Activated CD4-positive, alpha-beta memory T cell treated with anti-CD3 and anti-CD28 coated beads for 36 hours (primary cell): ENCODE measurements at regions of chr17 and their contacts with region 1.

Region 1: DNA sequence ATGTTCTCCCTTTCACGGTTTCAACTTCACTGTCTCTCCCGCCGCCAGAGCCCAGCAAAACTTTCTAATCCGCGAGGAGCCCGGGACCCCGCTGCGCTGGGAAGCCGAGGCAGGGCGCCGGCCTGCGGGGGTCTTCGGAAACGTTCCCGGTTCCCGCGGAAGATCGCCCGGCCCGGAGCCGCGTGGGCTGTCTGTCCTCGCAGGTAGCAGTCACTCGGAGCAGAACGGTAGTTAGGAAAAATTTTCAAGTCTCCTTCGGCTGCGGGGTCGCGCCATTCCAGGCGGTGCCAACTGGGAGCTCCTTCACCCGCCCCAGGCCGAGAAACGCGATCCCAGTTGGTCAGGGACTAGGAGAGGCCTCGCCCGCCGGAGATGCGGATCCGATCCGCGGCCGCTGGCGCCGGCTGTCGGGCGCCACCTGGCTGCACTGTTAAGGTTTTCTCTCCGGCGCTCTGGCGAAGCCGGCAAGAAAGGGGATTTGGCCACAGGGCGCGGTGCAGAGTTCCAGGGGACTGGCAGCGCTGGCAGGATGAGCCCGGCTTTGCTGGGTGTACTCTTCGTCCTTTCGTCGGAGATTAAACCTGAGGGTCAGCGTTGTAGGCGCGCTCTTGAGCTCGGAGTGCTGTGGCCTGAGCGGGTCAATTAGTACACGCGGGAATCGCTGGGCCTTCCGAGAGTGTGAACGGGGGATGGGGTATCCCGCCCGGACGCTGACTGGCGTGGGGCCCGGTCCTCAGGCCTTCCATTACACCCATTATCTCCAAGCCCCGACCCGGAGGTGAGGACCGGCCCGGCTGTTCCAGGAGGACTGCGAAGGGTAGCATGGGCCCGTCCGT is 135.4 kb downstream of the KCNJ12 start:
- DNase-seq: peak; percentile 78
- H3K4me3 Mint-ChIP-seq: peak overlapping the region; percentile 61
- H3K27ac Mint-ChIP-seq: no peak overlapping the region
- H3K4me1 Mint-ChIP-seq: peaks cover 16% of the 10 kb centered on the region
- H3K27me3 Mint-ChIP-seq: peaks cover 23% of the 10 kb centered on the region

Region 2: DNA sequence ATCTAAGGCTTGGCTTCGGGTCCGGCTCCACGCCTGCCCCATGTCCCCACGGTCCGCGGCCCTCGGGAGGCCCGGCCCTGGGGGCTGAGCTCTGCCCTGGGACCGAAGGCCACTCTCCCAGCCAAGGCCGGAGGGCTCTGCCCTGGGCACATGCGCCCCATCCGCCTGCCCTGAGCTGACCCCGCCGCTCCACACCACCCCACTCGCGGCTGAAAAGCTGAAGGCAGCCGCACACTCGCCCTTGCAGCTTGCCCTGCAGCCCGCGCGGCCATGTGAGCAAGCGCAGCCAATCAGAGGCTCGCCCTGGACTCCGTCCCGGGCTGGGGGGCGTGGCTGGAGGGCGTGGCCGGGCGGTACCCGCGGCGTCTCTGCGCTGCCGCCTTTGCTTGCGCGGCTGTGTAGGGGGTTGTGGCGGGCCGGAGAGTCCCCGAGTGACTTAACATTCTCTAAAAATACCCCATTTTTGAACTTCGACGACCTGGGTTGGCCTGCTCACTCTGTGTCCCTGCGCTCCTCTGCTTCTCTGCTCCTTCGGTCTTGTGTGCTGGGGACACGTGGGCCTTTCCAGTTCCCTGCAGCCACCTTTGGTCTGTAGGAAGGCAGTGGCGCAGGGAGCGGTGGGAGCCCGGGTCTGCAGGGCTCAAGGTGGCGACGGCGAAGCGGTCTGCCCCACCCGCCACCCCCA is 235.9 kb before region 1 on chr17:
- CTCF ChIA-PET with region 1: interaction called, 28 read pairs
- POLR2A ChIA-PET with region 1: no interaction called
- intact Hi-C with region 1: loop called (anchors 1 kb)
- DNase-seq: peak; percentile 96
- H3K4me3 Mint-ChIP-seq: peak overlapping the region; percentile 90
- H3K27ac Mint-ChIP-seq: peak overlapping the region; percentile 82
- H3K4me1 Mint-ChIP-seq: peaks cover 45% of the 10 kb centered on the region
- H3K27me3 Mint-ChIP-seq: no peaks in the 10 kb centered on the region

Region 3: DNA sequence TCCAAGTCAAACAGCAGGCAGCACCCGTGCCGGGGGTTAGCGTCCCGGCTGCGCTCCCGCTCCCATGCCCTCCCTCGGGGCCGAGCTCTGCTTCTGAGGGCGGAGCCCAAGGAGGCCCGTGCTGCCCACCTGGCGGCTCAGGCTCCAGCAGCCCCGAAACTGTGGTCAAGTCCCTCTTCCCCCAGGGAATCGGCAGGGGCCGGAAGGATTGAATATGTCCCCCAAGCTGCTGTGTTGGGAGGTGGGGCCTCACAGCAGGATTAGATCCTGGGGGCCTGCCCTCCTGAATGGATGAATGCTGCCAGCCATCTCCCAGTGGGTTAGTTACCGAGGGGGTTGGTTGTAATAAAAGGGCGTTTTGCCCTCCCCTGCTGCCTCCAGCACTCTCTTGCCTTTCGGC is 193.1 kb before region 1 on chr17:
- CTCF ChIA-PET with region 1: interaction called, 3 read pairs
- POLR2A ChIA-PET with region 1: no interaction called
- intact Hi-C with region 1: loop called (anchors 5 kb)
- DNase-seq: no peak
- H3K4me3 Mint-ChIP-seq: no peak overlapping the region
- H3K27ac Mint-ChIP-seq: no peak overlapping the region
- H3K4me1 Mint-ChIP-seq: peaks cover 7% of the 10 kb centered on the region
- H3K27me3 Mint-ChIP-seq: peaks cover 2% of the 10 kb centered on the region

Region 4: GRCh38 chr17:21457051-21458026 is 54.2 kb before region 1 on chr17:
- CTCF ChIA-PET with region 1: interaction called, 95 read pairs
- POLR2A ChIA-PET with region 1: interaction called, 11 read pairs
- intact Hi-C with region 1: loop called (anchors 1 kb)
- DNase-seq: peak; percentile 97
- H3K4me3 Mint-ChIP-seq: no peak overlapping the region
- H3K27ac Mint-ChIP-seq: peak overlapping the region; percentile 53
- H3K4me1 Mint-ChIP-seq: peaks cover 14% of the 10 kb centered on the region
- H3K27me3 Mint-ChIP-seq: peaks cover 6% of the 10 kb centered on the region